ENCODE measurements at regions of chr6 and their contacts with region 1.

Region 1: GRCh38 chr6:84183430-84183829 is 44.0 kb downstream of the CEP162 start:
- DNase-seq: no peak
- H3K4me3 Mint-ChIP-seq: no peak overlapping the region
- H3K27ac Mint-ChIP-seq: no peak overlapping the region
- H3K4me1 Mint-ChIP-seq: no peaks in the 10 kb centered on the region
- H3K27me3 Mint-ChIP-seq: no peaks in the 10 kb centered on the region
- CTCF ChIP-seq: no peak

Region 2: GRCh38 chr6:83846291-83846690 is 337.1 kb before region 1 on chr6:
- CTCF ChIA-PET with region 1: interaction called, 10 read pairs
- intact Hi-C with region 1: no loop called
- DNase-seq: no peak
- H3K4me3 Mint-ChIP-seq: no peak overlapping the region
- H3K27ac Mint-ChIP-seq: no peak overlapping the region
- H3K4me1 Mint-ChIP-seq: no peaks in the 10 kb centered on the region
- H3K27me3 Mint-ChIP-seq: peaks cover 28% of the 10 kb centered on the region
- CTCF ChIP-seq: no peak

Measured in Calu3 (cell line).